PC-9 (cell line): ENCODE measurements at regions of chr9 and their contacts with region 1.

Region 1: GRCh38 chr9:69549310-69550202 is 122.6 kb downstream of the APBA1 start:
- DNase-seq: peak; percentile 29 to 40
- H3K4me3 ChIP-seq: no peak overlapping the region
- H3K27ac ChIP-seq: no peak overlapping the region
- H3K4me1 ChIP-seq: no peaks in the 10 kb centered on the region
- H3K27me3 ChIP-seq: 0 out of 2 replicates have a peak, but pooled peaks cover 4% of the 10 kb centered on the region
- CTCF ChIP-seq: peak; percentile 96

Region 2: DNA sequence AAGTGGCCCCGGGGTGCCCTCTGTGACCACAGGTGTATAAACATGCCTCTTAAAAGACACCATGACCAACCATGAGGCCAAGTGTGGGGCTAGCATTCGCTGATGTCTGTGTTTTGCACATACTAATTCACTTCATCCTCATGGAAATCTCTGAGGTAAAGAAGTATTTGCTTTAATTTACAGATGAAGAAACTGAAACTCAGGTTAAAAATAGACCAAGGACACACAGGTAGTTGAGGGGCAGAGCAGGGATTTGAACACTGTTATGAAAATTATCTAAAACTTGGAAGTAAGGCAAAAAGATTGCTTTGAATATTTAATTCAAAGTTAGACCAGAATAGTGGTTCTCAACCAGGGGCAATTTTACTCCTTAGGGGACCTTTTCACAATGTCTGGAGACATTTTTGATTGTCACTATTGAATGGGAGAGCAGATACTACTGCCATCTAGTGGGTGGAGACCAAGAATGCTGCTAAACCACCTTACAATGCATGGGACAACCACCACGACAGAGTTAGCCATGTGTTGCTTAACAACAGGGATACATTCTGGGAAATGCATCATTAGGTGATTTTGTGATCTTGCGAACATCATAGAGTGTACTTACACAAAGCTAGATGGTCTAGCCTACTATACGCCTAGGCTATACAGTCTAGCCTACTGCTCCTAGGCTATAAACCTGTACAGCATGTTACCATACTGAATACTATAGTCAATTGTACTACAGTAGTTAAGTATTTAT is 522.0 kb before region 1 on chr9:
- CTCF ChIA-PET with region 1: no interaction called
- POLR2A ChIA-PET with region 1: no interaction called
- intact Hi-C with region 1: loop called (anchors 5 kb)
- DNase-seq: peak; percentile 21 to 50
- H3K4me3 ChIP-seq: no peak overlapping the region
- H3K27ac ChIP-seq: no peak overlapping the region
- H3K4me1 ChIP-seq: no peaks in the 10 kb centered on the region
- H3K27me3 ChIP-seq: peaks cover 40% of the 10 kb centered on the region
- CTCF ChIP-seq: peak; percentile 72

Region 3: GRCh38 chr9:69056191-69056815 is 493.3 kb before region 1 on chr9:
- CTCF ChIA-PET with region 1: no interaction called
- POLR2A ChIA-PET with region 1: no interaction called
- intact Hi-C with region 1: loop called (anchors 5 kb)
- DNase-seq: no peak
- H3K4me3 ChIP-seq: no peak overlapping the region
- H3K27ac ChIP-seq: no peak overlapping the region
- H3K4me1 ChIP-seq: no peaks in the 10 kb centered on the region
- H3K27me3 ChIP-seq: no peaks in the 10 kb centered on the region
- CTCF ChIP-seq: no peak

Region 4: DNA sequence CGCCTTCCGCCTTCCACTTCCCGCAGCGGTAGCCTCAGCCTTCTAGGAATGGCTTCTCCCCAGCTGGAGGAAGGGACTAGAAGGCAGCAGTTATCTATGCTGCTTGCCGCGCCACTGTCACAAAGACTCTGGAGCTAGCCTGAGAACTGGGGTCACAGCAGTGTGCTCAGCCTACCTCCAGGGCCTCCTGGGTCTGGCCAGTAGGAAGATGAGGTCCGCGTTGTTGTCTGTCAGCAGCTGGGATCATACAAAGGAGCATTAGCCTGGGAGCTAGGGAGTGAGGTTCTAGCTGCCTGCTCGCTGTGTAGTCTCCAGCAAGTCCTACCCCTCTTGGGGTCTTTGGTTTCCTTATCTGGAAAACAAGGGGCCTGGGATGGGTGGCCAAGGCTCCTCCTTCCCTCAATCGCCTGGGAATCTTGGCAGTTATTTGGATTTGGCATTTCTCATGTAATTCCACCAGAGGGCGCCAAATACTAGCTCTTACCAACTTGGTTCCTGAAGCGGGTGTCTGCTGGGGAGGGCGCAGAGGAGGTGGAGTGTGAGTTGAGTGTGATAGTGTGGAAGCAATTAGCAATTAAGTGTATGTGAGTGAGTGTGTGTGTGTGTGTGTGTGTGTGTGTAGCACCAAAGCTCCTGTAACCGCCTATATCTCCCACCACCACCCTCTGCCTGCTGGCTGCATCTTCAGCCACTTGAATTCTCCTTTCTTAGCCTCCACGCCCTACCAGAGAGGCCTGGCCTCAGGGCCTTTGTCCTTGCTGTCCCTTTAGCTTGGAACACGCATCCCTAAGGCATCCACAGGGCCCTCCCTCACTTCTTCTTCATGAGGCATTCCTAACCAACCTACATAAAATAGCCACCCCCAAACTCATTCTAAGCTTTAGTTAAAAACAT is 127.4 kb before region 1 on chr9:
- CTCF ChIA-PET with region 1: interaction called, 6 read pairs
- POLR2A ChIA-PET with region 1: no interaction called
- intact Hi-C with region 1: loop called (anchors 1 kb)
- DNase-seq: peak in 1 of 2 experiments; percentile 49
- H3K4me3 ChIP-seq: no peak overlapping the region
- H3K27ac ChIP-seq: no peak overlapping the region
- H3K4me1 ChIP-seq: no peaks in the 10 kb centered on the region
- H3K27me3 ChIP-seq: no peaks in the 10 kb centered on the region
- CTCF ChIP-seq: peak; percentile 93

Region 5: GRCh38 chr9:69535911-69536310 is 13.6 kb before region 1 on chr9:
- CTCF ChIA-PET with region 1: no interaction called
- POLR2A ChIA-PET with region 1: no interaction called
- intact Hi-C with region 1: no loop called
- DNase-seq: no peak
- H3K4me3 ChIP-seq: no peak overlapping the region
- H3K27ac ChIP-seq: no peak overlapping the region
- H3K4me1 ChIP-seq: no peaks in the 10 kb centered on the region
- H3K27me3 ChIP-seq: no peaks in the 10 kb centered on the region; the same call in none of the 2 replicates
- CTCF ChIP-seq: no peak

Region 6: GRCh38 chr9:69745716-69746437 is 196.3 kb after region 1 on chr9:
- CTCF ChIA-PET with region 1: no interaction called
- POLR2A ChIA-PET with region 1: no interaction called
- intact Hi-C with region 1: no loop called
- DNase-seq: no peak
- H3K4me3 ChIP-seq: no peak overlapping the region
- H3K27ac ChIP-seq: no peak overlapping the region
- H3K4me1 ChIP-seq: no peaks in the 10 kb centered on the region
- H3K27me3 ChIP-seq: no peaks in the 10 kb centered on the region
- CTCF ChIP-seq: peak; percentile 41; the same call in 1 of the 2 replicates

Region 7: DNA sequence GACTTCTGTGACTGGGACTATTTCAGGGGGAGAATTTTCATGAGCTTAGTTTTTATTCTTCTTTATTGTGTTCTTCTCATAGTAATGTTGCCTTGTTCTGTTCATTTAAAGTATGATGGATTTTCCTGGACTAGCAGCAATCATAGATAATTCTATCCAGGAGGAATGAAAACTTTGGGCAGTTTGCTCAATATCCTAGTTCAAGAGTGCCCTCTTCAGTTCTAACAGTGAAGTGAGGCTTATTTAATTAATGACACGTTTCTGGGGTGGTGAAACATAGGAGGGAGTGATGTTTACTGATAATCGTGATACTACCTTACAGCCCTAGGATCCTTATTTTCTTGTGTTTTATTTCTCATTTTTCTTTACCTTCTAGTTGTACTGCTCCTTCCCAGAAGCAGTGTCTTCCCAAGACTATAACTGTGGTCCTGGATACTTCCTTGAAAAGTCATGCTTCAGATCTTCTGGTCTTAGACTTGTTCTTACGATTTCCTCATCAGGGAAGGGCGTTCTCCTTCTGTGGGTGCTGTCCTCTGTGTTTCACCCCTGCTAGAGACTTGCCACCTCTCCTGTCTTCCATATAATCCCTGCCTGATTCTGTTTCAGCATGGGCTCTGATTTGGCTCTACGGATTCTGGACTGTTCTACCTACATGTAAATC is 328.4 kb after region 1 on chr9:
- CTCF ChIA-PET with region 1: no interaction called
- POLR2A ChIA-PET with region 1: no interaction called
- intact Hi-C with region 1: loop called (anchors 5 kb)
- DNase-seq: peak in 1 of 2 experiments; percentile 37
- H3K4me3 ChIP-seq: no peak overlapping the region
- H3K27ac ChIP-seq: no peak overlapping the region
- H3K4me1 ChIP-seq: 0 out of 2 replicates have a peak, but pooled peaks cover 5% of the 10 kb centered on the region
- H3K27me3 ChIP-seq: no peaks in the 10 kb centered on the region
- CTCF ChIP-seq: peak; percentile 73

Region 8: GRCh38 chr9:69932901-69933300 is 383.3 kb after region 1 on chr9:
- CTCF ChIA-PET with region 1: no interaction called
- POLR2A ChIA-PET with region 1: no interaction called
- intact Hi-C with region 1: loop called (anchors 2 kb)
- DNase-seq: peak in 1 of 2 experiments; percentile 17
- H3K4me3 ChIP-seq: no peak overlapping the region
- H3K27ac ChIP-seq: no peak overlapping the region
- H3K4me1 ChIP-seq: no peaks in the 10 kb centered on the region
- H3K27me3 ChIP-seq: no peaks in the 10 kb centered on the region
- CTCF ChIP-seq: peak; percentile 59